Colonic mucosa (tissue), 4 donors: ENCODE measurements at regions of chr3 and their contacts with region 1.

Region 1: GRCh38 chr3:123328851-123329635 is 119.8 kb downstream of the ADCY5 start:
- DNase-seq: peak; percentile 86
- H3K4me3 ChIP-seq: no peak overlapping the region
- H3K27ac ChIP-seq: no peak overlapping the region
- H3K4me1 ChIP-seq: no peaks in the 10 kb centered on the region
- H3K27me3 ChIP-seq: no peaks in the 10 kb centered on the region
- CTCF ChIP-seq: peak; percentile 97

Region 2: GRCh38 chr3:123489400-123490004 is 160.5 kb after region 1 on chr3:
- intact Hi-C with region 1: loop called (anchors 1 kb)
- DNase-seq: peak; percentile 77
- H3K4me3 ChIP-seq: no peak overlapping the region
- H3K27ac ChIP-seq: no peak overlapping the region
- H3K4me1 ChIP-seq: no peaks in the 10 kb centered on the region
- H3K27me3 ChIP-seq: no peaks in the 10 kb centered on the region
- CTCF ChIP-seq: peak; percentile 79

Region 3: DNA sequence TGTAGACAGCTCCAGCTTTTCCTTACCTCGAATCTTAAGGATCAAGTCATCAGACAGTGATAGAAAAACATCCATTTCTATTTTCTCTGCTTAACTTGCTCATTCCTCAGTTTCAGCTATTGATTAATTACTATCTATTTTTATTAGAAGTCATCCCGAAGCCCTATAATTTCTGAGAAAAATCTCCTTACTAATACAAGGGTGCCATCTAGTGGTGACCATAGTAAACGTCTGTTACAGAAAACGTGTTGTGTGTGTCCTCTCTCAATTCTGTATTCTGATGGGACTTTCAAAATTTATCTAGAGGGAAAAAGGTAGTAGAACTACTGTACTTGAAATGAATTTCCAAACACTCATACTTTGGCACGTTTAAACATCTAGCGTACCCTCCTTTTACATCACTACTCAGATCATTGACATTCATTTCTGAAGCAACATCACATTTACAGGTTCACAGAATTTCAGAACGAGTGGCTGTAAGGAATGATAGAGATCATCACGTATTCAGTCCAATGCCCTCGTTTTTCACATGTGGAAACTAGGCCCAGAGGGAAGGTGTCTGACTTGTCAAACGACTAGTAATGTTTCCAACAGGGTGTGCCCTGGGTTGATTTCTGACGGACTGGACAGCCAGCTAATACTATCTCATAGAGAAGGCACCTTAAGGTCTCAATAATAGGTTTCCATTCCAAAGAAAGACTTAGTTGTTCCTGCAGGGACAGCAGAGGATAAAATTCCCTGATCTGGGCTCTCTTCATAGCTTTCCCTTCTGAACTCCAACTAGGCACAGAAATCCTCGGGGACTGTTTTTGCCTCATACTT is 230.2 kb after region 1 on chr3:
- intact Hi-C with region 1: loop called (anchors 5 kb)
- DNase-seq: no peak
- H3K4me3 ChIP-seq: no peak overlapping the region
- H3K27ac ChIP-seq: no peak overlapping the region
- H3K4me1 ChIP-seq: no peaks in the 10 kb centered on the region
- H3K27me3 ChIP-seq: no peaks in the 10 kb centered on the region
- CTCF ChIP-seq: peak; percentile 72